ENCODE measurements at regions of chr10 and their contacts with region 1.

Region 1: DNA sequence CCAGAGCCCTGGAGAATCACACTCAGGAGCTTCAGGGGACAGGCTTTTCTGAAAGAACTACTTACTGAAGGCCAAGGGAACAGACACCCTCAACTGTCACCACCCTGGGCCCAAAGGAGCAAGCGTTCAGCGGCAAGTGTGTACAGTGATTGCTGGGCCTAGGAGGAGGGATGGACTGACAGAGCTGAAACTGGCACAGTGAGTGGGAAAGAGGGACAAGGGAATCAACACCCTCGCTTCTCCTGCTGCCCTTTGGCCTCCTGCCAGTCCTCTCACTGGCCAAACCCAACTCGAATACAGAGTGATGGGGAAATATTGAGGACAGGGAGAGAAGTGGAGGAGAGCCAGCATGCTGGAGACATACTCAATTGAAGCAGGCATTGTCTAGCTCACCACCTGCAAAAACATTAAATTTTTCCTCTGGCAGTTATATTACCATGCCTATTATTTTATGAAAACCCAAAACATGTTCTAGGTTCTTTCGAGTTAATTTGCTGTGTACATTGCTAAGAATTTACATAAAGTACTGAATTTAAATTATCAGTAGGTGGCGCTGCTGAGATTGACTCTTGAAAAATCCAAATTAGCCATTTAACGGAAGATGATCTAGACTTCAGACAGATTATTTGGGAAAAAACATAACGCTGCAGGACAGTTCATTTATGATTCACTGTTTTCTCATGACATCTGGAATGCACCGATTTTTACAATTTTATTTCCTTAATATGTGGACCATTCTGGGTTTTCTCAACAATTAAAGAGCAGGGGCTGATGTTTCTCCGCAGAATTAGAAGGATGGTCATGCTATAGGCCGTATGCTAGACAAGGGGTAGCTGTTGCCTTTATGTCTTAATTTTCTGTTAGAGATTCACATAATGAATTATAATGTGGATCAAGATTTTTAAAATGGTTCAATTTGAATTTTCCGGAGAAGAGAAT is 14.7 kb upstream of the TMEM236 start:
- DNase-seq: no peak
- ATAC-seq: peak; percentile 32

Region 2: DNA sequence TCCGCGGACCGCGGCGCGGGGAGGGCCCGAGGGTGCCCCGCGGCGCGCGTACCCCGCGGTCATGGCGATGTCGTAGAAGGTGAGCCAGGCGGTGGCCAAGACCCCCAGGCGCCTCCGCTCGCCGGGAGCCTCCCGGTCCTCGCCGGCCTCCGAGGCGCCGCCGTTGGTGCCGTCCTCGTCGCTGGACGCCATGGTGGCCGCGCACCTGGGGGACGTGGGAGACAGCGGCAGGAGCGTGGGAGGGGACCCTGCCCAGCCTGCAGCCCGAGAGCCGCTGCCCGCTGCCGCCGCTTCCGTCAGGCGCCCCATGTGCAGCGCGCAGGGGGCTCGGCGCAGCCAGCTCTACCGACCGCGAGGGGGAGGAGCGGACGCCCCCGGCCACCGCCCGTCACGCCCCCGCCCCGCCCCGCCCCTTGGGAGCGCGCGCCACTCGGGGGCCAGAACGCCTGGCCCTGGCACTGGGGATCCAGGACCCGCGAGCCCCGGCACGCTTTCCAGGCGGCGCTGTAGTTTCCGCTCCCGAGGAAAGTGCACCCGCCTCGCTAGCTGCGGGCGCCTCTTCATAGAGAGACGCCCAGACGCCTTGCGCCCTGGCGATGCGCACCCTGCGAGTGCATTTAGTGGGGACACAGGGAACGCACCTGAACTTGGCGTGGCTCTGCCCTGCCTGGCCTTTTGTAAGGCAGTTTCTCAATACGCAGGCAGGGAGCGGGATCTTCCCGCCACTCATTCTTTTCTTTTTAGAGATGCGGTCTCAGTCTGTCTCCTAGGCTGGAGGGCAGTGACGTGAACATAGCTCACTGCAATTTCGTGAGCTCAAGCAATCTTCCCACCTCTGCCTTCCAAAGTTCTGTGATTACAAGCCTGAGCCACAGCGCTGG is 120.0 kb before region 1 on chr10 and contains the start of gene HACD1:
- intact Hi-C with region 1: loop called (anchors 1 kb)
- DNase-seq: peak; percentile 82
- ATAC-seq: peak; percentile 87
- total RNA-seq, gene HACD1: 157 TPM

Region 3: DNA sequence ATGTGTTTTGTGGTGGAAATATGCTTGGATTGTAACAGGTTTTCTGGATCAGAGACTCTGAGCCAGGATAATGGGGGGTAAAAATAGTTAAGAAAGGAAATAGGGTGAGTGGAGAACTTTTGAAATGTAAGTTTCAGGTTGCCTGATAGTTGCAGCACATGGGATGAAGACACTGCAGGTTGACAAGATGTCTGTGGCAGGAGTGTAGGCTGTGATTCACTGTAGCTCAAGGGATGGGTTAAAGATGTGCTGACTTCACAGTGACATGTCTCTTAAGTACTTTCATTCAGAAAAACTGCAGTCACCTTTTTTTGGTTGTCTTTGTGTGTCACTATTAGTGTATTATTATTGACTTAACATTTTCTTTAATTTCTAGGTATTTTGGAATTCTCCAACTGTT is 150.9 kb after region 1 on chr10:
- intact Hi-C with region 1: no loop called
- DNase-seq: no peak
- ATAC-seq: no peak

Region 4: DNA sequence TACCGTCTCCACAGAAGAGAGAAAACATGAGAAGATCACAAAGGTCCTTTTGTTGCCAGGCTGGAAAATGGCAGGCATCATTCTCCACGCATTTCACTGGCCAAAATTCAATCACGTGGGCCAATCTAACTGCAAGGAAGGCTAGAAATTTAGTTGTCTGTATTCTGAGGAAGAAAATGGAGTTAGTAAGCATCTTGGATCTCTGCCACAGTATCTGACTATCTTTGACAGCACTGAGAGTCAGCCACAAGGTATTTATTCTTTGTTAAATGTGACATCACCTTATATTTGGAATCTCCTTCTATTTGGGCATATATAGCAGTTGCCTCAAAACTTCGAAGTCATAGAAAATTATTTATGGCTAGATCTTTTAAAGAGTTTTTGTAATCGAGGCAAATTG is 700.2 kb after region 1 on chr10:
- intact Hi-C with region 1: no loop called
- DNase-seq: no peak
- ATAC-seq: no peak